ENCODE measurements at regions of chr15 and their contacts with region 1.

Region 1: GRCh38 chr15:40323239-40323952 is at the start of gene INAFM2:
- DNase-seq: peak; percentile 92
- ATAC-seq: peak; percentile 87
- H3K4me3 Mint-ChIP-seq: peak within 1 kb of the TSS; percentile 71
- H3K27ac Mint-ChIP-seq: no peak within 1 kb of the TSS
- H3K4me1 Mint-ChIP-seq: peaks cover 25% of the 10 kb centered on the region
- H3K27me3 Mint-ChIP-seq: no peaks in the 10 kb centered on the region
- total RNA-seq, gene INAFM2: 9.9 to 11.2 TPM

Region 2: GRCh38 chr15:40044717-40045571 is 278.5 kb before region 1 on chr15:
- CTCF ChIA-PET with region 1: interaction called, 3 read pairs
- POLR2A ChIA-PET with region 1: interaction called, 3 read pairs
- intact Hi-C with region 1: loop called in 1 of 2 experiments (anchors 5 kb)
- DNase-seq: peak; percentile 94
- ATAC-seq: peak; percentile 75
- H3K4me3 Mint-ChIP-seq: peak overlapping the region; percentile 46
- H3K27ac Mint-ChIP-seq: peak overlapping the region; percentile 47
- H3K4me1 Mint-ChIP-seq: peaks cover 76% of the 10 kb centered on the region
- H3K27me3 Mint-ChIP-seq: no peaks in the 10 kb centered on the region

Region 3: DNA sequence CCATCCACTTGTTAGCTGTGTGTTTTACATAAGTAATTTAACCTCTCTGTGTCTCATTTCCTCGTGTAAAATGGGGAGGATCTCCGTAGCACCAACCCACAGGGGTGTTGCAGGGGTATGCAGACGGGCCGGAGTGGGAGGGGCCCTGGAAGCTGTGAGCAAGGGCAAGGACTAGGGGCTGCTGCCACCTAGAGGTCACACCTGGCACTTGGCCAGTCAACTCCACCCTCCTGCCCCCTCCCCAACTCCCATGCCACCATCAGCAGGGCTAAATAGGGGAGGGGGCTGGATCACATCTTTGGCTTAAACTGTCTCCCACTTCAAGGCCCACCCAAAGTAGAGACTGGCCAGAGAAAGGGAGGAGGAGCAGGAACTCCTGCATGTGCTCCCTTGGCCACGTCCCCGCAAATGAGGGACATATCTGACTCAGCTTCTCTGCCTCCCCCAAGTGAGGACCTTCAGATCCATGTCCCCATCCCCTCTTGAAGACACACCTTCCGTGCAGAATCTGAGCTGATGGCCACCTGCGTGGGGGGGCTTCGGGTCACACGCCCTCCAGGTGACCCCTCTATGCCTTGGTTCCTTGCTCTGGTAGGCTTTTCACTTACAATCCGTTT is 14.8 kb after region 1 on chr15:
- CTCF ChIA-PET with region 1: interaction called, 150 read pairs
- POLR2A ChIA-PET with region 1: interaction called, 7 read pairs
- intact Hi-C with region 1: loop called (anchors 1 kb)
- DNase-seq: peak; percentile 90
- ATAC-seq: peak; percentile 90
- H3K4me3 Mint-ChIP-seq: no peak overlapping the region
- H3K27ac Mint-ChIP-seq: no peak overlapping the region
- H3K4me1 Mint-ChIP-seq: peaks cover 16% of the 10 kb centered on the region
- H3K27me3 Mint-ChIP-seq: no peaks in the 10 kb centered on the region

Region 4: GRCh38 chr15:40367686-40368611 is 44.6 kb after region 1 on chr15:
- CTCF ChIA-PET with region 1: interaction called, 12 read pairs
- POLR2A ChIA-PET with region 1: interaction called, 3 read pairs
- intact Hi-C with region 1: loop called (anchors 1 to 5 kb)
- DNase-seq: peak; percentile 94
- ATAC-seq: peak; percentile 98
- H3K4me3 Mint-ChIP-seq: peak overlapping the region; percentile 74
- H3K27ac Mint-ChIP-seq: peak overlapping the region; percentile 51
- H3K4me1 Mint-ChIP-seq: peaks cover 8% of the 10 kb centered on the region
- H3K27me3 Mint-ChIP-seq: no peaks in the 10 kb centered on the region

Region 5: GRCh38 chr15:40421246-40422157 is 98.1 kb after region 1 on chr15:
- CTCF ChIA-PET with region 1: interaction called, 8 read pairs
- POLR2A ChIA-PET with region 1: no interaction called
- intact Hi-C with region 1: loop called in 1 of 2 experiments (anchors 1 kb)
- DNase-seq: peak; percentile 91
- ATAC-seq: peak; percentile 98
- H3K4me3 Mint-ChIP-seq: no peak overlapping the region
- H3K27ac Mint-ChIP-seq: no peak overlapping the region
- H3K4me1 Mint-ChIP-seq: no peaks in the 10 kb centered on the region
- H3K27me3 Mint-ChIP-seq: no peaks in the 10 kb centered on the region

Region 6: DNA sequence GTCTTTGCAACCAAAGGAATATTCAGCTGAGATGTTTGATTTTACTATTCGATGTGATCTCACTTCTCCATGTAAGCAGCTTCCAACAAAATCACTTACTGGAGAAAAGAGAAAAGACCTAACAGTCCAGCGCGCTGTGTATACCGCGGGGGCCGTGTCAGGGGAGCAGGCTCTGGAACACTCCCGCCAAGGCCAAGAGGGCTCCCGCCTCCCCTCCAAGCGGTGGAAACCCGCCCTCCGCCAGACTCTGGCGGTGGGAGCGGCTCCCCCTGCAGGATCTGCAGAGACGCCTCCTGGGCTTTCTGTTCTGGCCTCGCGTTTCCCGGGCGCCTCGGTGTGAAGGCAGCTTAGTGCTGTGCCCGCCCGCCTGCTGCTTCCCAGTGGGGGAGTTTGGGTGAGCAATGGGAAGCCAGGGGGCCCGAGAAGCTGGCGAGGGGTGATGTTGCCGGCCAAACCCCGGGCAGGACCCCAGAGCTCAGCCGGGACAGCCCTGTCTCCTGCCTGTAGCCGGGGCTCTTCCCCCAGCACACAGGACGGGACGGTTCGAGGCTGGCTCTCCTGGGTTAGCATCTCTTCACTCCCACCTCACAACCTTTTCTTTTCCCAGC is 183.7 kb after region 1 on chr15:
- CTCF ChIA-PET with region 1: no interaction called
- POLR2A ChIA-PET with region 1: no interaction called
- intact Hi-C with region 1: no loop called
- DNase-seq: peak; percentile 82
- ATAC-seq: peak; percentile 86
- H3K4me3 Mint-ChIP-seq: peak overlapping the region; percentile 6
- H3K27ac Mint-ChIP-seq: no peak overlapping the region
- H3K4me1 Mint-ChIP-seq: peaks cover 16% of the 10 kb centered on the region
- H3K27me3 Mint-ChIP-seq: peaks cover 50% of the 10 kb centered on the region